ENCODE measurements at regions of chr14 and their contacts with region 1.

Region 1: DNA sequence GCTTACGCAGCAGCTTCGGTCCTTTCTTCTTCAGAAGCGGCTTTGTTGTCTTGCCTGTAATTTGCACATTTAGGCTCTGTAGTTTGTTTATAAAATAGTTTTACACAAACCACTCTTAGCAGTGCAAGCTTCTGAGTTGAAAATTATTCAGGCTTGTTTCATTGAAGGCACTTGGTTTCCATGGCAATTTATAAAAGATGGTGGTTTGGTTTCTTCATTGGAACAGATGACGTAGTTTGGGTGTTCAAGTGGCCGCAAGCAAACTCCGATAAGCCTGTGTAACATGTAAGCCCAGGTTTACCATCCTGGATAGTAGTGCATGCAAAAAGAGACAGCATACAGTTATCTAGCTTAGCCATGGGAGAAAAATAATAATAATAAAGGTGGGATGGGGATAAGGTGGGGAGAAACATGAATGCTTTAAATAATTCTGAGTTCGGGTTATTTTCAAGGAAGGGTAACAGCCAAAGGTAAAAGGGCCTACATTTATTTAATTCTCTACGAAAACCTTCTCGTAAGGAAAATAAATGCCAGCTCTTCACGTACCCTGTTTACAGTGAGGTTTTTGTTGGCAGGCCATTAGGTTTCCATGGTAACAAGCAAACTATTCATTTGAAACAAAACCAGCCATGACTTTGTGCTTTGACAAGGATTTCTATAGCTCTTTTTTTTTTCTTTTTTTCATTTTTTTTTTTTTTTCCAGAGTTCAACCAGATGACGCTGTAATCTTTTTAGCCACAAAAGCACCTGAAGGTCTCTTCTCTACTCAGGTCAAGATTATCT is 189.6 kb upstream of the RPL10L start:
- DNase-seq: no peak

Region 2: GRCh38 chr14:46646796-46647195 is 194.3 kb before region 1 on chr14:
- intact Hi-C with region 1: loop called (anchors 10 kb)
- DNase-seq: no peak

Region 3: GRCh38 chr14:46887144-46887543 is 46.0 kb after region 1 on chr14:
- intact Hi-C with region 1: no loop called
- DNase-seq: no peak

Region 4: DNA sequence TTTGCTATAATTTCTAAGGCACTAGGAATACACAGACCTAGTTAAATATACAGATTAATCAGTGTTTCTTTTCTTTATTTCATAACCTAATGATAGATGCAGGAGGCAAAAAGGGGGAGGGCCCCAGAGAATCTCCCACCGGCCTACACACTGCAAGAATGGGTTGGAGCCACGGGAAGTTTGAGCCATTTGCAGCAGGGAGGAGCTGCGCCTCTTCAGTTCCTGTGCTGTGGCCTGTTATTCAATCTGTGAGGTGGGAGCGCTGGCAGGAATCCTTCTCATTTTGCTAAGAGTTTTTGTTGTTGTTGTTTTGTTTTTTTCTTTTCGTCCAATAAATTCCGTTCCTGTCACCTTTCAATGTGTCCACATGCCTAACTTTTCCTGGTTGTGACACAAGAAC is 61.7 kb after region 1 on chr14:
- intact Hi-C with region 1: no loop called
- DNase-seq: no peak